Transverse colon (tissue), 4 donors: ENCODE measurements at regions of chr12 and their contacts with region 1.

Region 1: GRCh38 chr12:55738123-55739024 is 4.5 kb upstream of the GDF11 start:
- DNase-seq: peak; percentile 84
- H3K4me3 ChIP-seq: peak overlapping the region; percentile 34 to 62 (median 40)
- H3K27ac ChIP-seq: peak overlapping the region; percentile 72 to 91 (median 83)
- H3K4me1 ChIP-seq: peaks cover 7 to 26% (median 22%) of the 10 kb centered on the region in 4 donors
- H3K27me3 ChIP-seq: peaks cover 7% of the 10 kb centered on the region
- CTCF ChIP-seq: peak; percentile 85 to 98 (median 87)
- EP300 ChIP-seq: no peak
- POLR2A ChIP-seq: no peak

Region 2: DNA sequence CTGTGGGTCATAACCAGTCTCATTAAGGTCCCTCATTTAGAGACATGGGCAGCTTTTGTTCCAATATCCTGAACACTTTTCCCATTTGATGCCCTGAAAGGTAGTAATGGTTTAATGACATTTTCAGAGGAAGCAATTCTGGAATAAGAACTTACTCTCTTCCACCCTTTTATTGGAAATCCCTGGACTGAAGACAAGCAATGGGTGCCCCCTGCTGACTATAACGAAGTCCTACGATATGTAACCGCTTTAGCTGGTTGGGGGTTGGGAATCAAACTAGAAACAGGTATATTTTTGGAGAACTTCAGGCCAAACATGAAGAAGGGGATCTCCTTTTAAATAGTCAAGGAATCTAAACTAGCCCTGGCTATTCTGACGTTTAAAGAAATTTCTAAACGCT is 58.7 kb after region 1 on chr12:
- in situ Hi-C with region 1: no loop called
- intact Hi-C with region 1: loop called (anchors 10 kb)
- DNase-seq: no peak
- H3K4me3 ChIP-seq: no peak overlapping the region
- H3K27ac ChIP-seq: no peak overlapping the region
- H3K4me1 ChIP-seq: peaks cover 0 to 7% (median 0%) of the 10 kb centered on the region in 4 donors
- H3K27me3 ChIP-seq: no peaks in the 10 kb centered on the region
- CTCF ChIP-seq: peak in 4 of 5 experiments; percentile 28 to 41 (median 36)
- EP300 ChIP-seq: no peak
- POLR2A ChIP-seq: no peak

Region 3: DNA sequence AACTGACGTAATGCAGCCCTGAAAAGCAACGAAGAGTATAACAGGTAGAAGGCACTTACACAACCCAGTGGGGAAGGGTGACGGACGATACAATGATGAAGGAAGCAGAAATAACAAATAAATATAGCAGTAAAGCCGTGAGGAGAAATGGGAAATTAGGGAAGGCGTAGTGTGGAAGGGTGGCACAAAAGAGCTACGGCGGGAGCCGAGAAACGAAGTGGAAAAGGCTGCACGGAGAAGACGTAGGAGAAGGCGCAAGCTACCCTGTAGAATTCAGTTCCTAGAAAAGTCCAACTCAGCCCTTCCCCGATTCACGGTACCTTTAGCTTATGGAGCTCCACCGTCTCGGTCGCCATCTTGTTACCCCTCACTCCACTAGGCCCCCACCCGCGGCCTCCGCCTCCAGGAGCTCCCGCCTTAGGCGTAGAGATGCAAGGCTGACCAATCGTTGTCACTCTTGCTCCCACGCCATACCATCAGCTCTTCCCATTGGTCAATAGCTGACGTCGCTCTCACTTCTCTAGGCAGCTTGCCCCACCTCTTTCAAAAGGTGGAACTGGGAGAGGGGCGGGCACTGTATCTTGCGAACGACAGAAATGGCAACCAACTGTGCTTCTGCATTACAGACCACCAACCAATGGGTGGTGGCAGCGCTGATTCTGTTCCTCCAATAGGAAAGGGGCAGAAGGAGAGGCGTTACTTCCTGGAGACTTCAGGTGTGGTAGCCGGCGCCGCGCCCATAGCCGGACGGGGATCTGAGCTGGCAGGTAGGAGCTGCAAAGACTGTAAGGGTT is 79.2 kb after region 1 on chr12 and contains the starts of genes ORMDL2 and SARNP:
- in situ Hi-C with region 1: loop called in 1 of 4 experiments (anchors 10 kb)
- intact Hi-C with region 1: loop called (anchors 10 kb)
- DNase-seq: peak; percentile 98
- H3K4me3 ChIP-seq: peak within 1 kb of the TSS; percentile 74 to 87 (median 86)
- H3K27ac ChIP-seq: peak within 1 kb of the TSS; percentile 91 to 97 (median 93)
- H3K4me1 ChIP-seq: peaks cover 19 to 50% (median 29%) of the 10 kb centered on the region in 4 donors
- H3K27me3 ChIP-seq: no peaks in the 10 kb centered on the region
- CTCF ChIP-seq: no peak
- EP300 ChIP-seq: no peak
- POLR2A ChIP-seq: peak; percentile 87
- total RNA-seq, gene ORMDL2: 3.7 to 40.3 (median 21.7) TPM
- total RNA-seq, gene SARNP: 38.0 to 50.7 (median 45.0) TPM

Region 4: DNA sequence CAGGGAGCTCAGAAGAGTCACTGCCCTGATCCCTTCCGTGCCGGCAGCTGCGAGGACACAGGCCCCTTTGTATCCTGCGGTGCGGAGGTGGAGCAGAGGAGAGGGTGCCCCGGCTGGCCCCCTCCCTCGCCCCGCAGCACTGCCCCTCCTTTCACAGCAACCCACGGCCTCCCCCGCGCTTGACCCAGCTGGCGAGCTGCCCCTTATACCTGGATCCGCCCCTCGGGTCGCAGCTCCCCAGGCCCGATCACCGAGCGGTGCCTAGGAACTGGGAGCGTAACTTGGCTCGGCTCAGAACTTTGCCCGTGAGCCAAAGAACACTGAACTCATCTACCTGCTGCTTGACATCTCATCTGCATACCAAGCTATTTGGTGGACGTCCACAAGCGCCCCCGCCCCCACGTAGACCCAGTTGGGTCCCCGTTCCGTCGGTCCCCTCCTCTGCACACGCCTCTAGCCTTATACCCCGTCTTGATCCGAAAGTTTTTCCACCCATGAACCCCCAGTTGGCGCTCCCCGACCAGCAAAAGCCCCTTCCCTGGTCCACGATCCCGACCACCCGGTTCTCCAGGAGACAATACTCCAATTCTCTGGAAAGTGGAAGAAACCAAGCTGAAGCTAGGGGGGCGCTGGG is 91.7 kb after region 1 on chr12:
- in situ Hi-C with region 1: no loop called
- intact Hi-C with region 1: loop called (anchors 10 kb)
- DNase-seq: peak; percentile 64
- H3K4me3 ChIP-seq: peak overlapping the region; percentile 62 to 85 (median 82)
- H3K27ac ChIP-seq: peak overlapping the region; percentile 95 to 97 (median 96)
- H3K4me1 ChIP-seq: peaks cover 6 to 52% (median 36%) of the 10 kb centered on the region in 4 donors
- H3K27me3 ChIP-seq: no peaks in the 10 kb centered on the region
- CTCF ChIP-seq: no peak
- EP300 ChIP-seq: no peak
- POLR2A ChIP-seq: peak; percentile 34

Region 5: GRCh38 chr12:55926738-55927587 is 188.6 kb after region 1 on chr12:
- in situ Hi-C with region 1: loop called in 3 of 4 experiments (anchors 5 to 10 kb)
- intact Hi-C with region 1: no loop called
- DNase-seq: peak; percentile 91
- H3K4me3 ChIP-seq: peak overlapping the region; percentile 32 to 84 (median 80)
- H3K27ac ChIP-seq: peak overlapping the region; percentile 92 to 99 (median 98)
- H3K4me1 ChIP-seq: peaks cover 29 to 55% (median 45%) of the 10 kb centered on the region in 4 donors
- H3K27me3 ChIP-seq: no peaks in the 10 kb centered on the region
- CTCF ChIP-seq: peak; percentile 64 to 88 (median 73)
- EP300 ChIP-seq: no peak
- POLR2A ChIP-seq: no peak

Region 6: DNA sequence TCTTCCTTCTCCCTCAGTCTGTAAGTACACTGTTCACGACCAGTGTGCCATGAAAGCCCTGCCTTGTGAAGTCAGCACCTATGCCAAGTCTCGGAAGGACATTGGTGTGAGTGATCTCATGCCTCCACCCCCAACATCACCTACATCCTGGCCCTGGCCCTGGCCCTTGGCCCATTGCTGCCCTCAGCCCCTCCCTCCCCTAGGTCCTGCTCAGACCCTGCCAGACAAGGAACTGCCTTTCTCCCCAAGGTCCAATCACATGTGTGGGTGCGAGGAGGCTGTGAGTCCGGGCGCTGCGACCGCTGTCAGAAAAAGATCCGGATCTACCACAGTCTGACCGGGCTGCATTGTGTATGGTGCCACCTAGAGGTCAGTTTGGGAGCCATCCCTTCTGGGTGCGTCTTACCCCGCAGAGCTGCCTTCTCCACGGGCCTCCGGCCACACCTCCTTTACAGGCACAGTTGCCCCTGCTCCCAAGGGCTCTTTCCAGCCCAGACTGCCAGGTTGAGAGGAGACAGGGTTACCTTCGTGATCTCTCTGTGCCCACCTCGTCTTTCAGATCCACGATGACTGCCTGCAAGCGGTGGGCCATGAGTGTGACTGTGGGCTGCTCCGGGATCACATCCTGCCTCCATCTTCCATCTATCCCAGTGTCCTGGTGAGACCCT is 201.8 kb after region 1 on chr12:
- in situ Hi-C with region 1: loop called in 2 of 4 experiments (anchors 10 kb)
- intact Hi-C with region 1: loop called (anchors 2 kb)
- DNase-seq: peak; percentile 92
- H3K4me3 ChIP-seq: no peak overlapping the region
- H3K27ac ChIP-seq: peak overlapping the region; percentile 58 to 72 (median 60)
- H3K4me1 ChIP-seq: peaks cover 0 to 14% (median 7%) of the 10 kb centered on the region in 4 donors
- H3K27me3 ChIP-seq: no peaks in the 10 kb centered on the region
- CTCF ChIP-seq: peak; percentile 87 to 94 (median 91)
- EP300 ChIP-seq: no peak
- POLR2A ChIP-seq: no peak